Activated CD8-positive, alpha-beta T cell treated with anti-CD3 and anti-CD28 coated beads for 36 hours (primary cell): ENCODE measurements at regions of chr5 and their contacts with region 1.

Region 1: DNA sequence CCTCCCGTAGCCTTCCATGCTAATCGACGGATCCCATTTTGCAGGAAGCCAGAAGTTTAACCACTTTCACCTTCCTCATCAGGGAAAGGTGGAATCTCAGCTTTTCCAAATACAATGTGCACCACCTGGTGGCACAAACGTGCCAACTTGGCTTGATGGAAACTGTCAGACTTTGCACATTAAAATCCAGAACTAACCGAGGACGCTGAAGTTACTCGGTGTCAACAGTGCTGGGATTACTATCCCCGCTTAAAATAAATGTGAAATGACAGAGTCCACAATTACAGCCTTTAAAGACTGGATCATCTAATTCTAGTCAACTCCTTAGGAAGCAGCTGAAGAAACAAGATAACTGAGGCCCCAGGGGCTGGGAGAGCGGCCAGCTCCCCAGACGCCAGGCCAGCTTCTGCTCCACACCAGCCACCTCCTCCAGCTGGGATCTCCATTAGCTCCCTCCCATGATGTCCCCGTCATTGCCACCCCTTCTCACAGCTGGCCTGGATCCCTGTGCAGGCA is 50.1 kb upstream of the RETREG1 start:
- DNase-seq: peak; percentile 51
- ATAC-seq: peak; percentile 34
- H3K4me3 Mint-ChIP-seq: no peak overlapping the region
- H3K27ac Mint-ChIP-seq: no peak overlapping the region
- H3K4me1 Mint-ChIP-seq: peaks cover 5% of the 10 kb centered on the region
- H3K27me3 Mint-ChIP-seq: no peaks in the 10 kb centered on the region
- CTCF ChIP-seq: peak; percentile 60

Region 2: GRCh38 chr5:16489322-16489791 is 177.6 kb before region 1 on chr5:
- CTCF ChIA-PET with region 1: interaction called, 13 read pairs
- POLR2A ChIA-PET with region 1: no interaction called
- intact Hi-C with region 1: loop called (anchors 2 kb)
- DNase-seq: no peak
- ATAC-seq: peak; percentile 84
- H3K4me3 Mint-ChIP-seq: no peak overlapping the region
- H3K27ac Mint-ChIP-seq: no peak overlapping the region
- H3K4me1 Mint-ChIP-seq: peaks cover 30% of the 10 kb centered on the region
- H3K27me3 Mint-ChIP-seq: no peaks in the 10 kb centered on the region
- CTCF ChIP-seq: peak; percentile 49

Region 3: GRCh38 chr5:16579142-16579847 is 87.6 kb before region 1 on chr5:
- CTCF ChIA-PET with region 1: no interaction called
- POLR2A ChIA-PET with region 1: no interaction called
- intact Hi-C with region 1: no loop called
- DNase-seq: no peak
- ATAC-seq: no peak
- H3K4me3 Mint-ChIP-seq: no peak overlapping the region
- H3K27ac Mint-ChIP-seq: no peak overlapping the region
- H3K4me1 Mint-ChIP-seq: peaks cover 29% of the 10 kb centered on the region
- H3K27me3 Mint-ChIP-seq: no peaks in the 10 kb centered on the region
- CTCF ChIP-seq: no peak

Region 4: GRCh38 chr5:16656561-16657191 is 10.3 kb before region 1 on chr5:
- CTCF ChIA-PET with region 1: interaction called, 16 read pairs
- POLR2A ChIA-PET with region 1: no interaction called
- intact Hi-C with region 1: no loop called
- DNase-seq: no peak
- ATAC-seq: no peak
- H3K4me3 Mint-ChIP-seq: no peak overlapping the region
- H3K27ac Mint-ChIP-seq: no peak overlapping the region
- H3K4me1 Mint-ChIP-seq: peaks cover 10% of the 10 kb centered on the region
- H3K27me3 Mint-ChIP-seq: no peaks in the 10 kb centered on the region
- CTCF ChIP-seq: no peak